Ascending aorta (tissue), 2 donors: ENCODE measurements at regions of chr3 and their contacts with region 1.

Region 1: DNA sequence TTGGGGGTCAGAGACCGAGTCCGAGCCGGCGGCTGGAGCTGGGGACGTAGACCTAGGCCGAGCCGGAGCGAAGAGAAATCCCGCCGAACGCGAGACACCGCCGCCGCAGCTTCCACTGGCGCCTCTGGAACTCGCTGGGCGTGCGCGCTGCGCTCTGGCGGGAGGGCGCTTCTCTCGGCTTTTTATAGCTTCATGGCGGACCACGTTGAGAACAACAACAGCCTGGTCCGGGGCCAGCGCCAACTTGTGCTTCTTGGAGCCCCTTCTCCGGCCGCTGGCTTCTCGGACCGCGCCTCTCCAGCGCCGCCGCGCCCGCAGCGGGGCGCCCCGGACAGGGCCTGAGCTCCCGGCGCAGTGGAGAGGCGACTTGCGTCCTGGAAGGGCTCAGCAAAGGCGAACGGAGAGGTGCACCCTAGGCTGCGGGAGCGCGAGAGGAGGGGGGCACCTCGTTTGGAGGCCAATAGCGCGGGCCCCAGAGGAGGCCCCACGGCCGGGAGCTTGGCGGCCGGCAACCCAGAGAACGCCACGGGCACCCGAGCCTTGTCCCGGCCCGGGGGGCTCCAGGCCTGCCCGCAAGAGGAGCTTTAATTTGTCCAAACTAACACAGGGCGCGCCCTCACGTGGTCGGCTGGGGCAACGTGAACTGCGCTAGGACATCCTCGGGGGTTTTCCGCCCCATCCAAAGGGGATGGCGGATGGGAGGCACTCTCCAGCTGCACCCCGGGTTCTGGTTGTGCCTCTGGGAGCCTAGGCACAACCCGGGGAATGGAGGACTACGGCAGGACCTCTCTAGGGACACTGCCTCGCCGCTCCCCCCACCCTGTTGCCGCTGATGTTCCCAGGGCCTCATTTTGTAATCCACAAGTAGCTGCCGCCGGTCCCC is 37.7 kb downstream of the HMCES start:
- DNase-seq: peak in 1 of 2 donors; percentile 91
- H3K4me3 ChIP-seq: peak overlapping the region; percentile 82 to 87
- H3K27ac ChIP-seq: peak overlapping the region; percentile 89 to 90
- H3K4me1 ChIP-seq: peaks cover 5 to 18% of the 10 kb centered on the region in 2 donors
- H3K27me3 ChIP-seq: no peaks in the 10 kb centered on the region
- CTCF ChIP-seq: peak in 2 of 3 experiments; percentile 57 to 68

Region 2: DNA sequence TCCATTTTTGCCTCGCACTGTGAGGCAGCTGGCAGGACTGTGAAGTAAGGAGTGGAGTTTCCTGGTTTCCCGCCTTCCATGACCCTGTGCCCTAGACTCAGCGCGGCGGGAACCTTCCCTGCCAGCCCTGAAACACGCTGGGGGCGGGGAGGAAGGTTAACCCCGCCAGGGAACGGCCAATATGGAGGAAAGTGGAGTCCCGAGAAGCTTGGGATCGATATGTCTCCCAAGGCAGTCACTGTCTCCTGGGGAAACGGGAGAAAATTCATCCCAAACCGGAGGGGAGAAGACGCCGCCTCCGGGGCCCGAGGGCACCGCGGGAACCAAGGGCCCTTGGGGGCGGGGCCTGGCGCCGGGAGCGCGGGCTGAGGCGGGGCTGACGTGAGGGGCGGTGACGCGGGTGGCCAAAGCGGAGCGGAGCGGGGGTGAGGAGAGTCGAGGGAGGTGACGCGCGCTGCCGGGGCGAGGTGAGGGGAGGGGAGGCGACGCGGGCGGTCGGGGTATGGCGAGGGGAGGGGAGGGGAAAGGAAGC is 37.9 kb before region 1 on chr3 and contains the start of gene HMCES:
- intact Hi-C with region 1: loop called (anchors 1 kb)
- DNase-seq: peak; percentile 61 to 94
- H3K4me3 ChIP-seq: peak within 1 kb of the TSS; percentile 60 to 93
- H3K27ac ChIP-seq: peak within 1 kb of the TSS; percentile 95 to 98
- H3K4me1 ChIP-seq: peaks cover 0 to 14% of the 10 kb centered on the region in 2 donors
- H3K27me3 ChIP-seq: no peaks in the 10 kb centered on the region
- CTCF ChIP-seq: peak in 1 of 3 experiments; percentile 22
- total RNA-seq, gene HMCES: 11.2 TPM

Region 3: DNA sequence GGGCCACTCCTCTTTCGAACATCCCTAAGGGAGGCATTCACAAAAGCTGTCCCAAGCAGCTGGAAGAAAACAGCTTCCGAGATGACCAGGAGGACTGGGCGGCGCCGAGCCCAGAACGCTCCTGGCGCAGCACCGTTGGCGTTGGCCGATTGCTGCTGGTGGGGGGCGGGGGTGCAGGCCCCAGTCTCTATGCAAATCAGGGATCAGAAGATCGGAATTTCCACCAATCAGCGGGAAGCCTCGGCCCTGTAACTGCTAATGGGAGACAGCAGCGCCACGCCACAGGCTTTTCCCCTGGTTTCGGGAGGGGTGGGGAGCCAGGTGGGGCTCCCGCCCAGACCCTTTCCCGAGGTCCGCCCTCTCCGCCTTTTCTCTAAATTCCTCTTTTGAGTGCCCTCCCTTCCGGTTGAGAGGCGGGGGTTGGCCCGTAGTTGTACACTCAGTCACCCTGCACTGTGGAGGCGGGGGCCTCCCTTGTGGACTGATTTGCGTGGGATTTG is 10.7 kb before region 1 on chr3:
- intact Hi-C with region 1: loop called (anchors 1 kb)
- DNase-seq: peak; percentile 90 to 96
- H3K4me3 ChIP-seq: peak overlapping the region; percentile 33 to 52
- H3K27ac ChIP-seq: peak overlapping the region; percentile 80 to 90
- H3K4me1 ChIP-seq: peaks cover 0 to 12% of the 10 kb centered on the region in 2 donors
- H3K27me3 ChIP-seq: no peaks in the 10 kb centered on the region
- CTCF ChIP-seq: no peak